Activated CD4-positive, alpha-beta T cell treated with anti-CD3 and anti-CD28 coated beads for 36 hours (primary cell): ENCODE measurements at regions of chr16 and their contacts with region 1.

Region 1: DNA sequence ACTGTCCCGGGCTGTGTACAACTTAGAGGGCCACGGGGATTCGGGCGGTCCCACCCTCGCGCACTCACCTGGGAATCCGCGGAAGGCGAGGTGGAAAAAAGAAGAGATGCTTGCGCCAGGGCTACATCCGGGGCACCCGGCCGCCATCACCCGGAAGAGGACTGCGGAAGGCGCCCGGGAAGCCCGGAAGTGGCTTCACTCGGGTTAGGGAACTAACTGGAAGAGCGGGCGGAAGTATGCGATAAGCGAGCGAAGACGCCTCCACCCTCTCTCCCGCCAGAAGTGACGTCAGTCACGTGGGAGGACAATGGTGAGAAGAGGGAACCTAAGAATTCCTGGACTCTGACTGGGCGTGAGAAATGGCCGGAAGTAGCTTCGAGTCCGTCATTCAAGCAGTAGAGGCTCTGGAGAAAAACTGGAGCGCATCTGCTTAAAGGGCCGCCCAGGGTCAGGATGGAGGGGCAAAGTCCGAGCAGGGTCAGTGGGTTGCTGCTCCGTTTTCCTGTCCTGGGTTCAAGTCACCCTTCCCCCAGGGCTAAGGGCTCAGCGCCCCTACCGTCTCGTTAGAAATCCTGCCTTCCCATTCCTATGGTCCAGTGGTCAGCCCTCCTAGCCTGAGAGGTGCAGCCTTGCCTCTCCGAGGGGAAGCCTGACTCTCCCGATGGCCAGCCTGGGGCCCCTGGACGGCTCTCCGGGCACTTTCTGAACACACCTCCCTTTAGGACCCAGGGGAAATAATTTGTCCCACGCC is at the start of gene CD2BP2:
- DNase-seq: peak; percentile 94
- ATAC-seq: peak; percentile 88
- H3K4me3 Mint-ChIP-seq: peak within 1 kb of the TSS; percentile 90
- H3K27ac Mint-ChIP-seq: peak within 1 kb of the TSS; percentile 94
- H3K4me1 Mint-ChIP-seq: peaks cover 32% of the 10 kb centered on the region
- H3K27me3 Mint-ChIP-seq: no peaks in the 10 kb centered on the region
- total RNA-seq, gene CD2BP2: 42.3 to 51.8 TPM

Region 2: GRCh38 chr16:30335598-30336474 is 19.5 kb before region 1 on chr16:
- CTCF ChIA-PET with region 1: no interaction called
- POLR2A ChIA-PET with region 1: no interaction called
- intact Hi-C with region 1: loop called (anchors 1 to 2 kb)
- DNase-seq: peak; percentile 55
- ATAC-seq: peak; percentile 13
- H3K4me3 Mint-ChIP-seq: peak overlapping the region; percentile 87
- H3K27ac Mint-ChIP-seq: peak overlapping the region; percentile 73
- H3K4me1 Mint-ChIP-seq: peaks cover 22% of the 10 kb centered on the region
- H3K27me3 Mint-ChIP-seq: no peaks in the 10 kb centered on the region

Region 3: DNA sequence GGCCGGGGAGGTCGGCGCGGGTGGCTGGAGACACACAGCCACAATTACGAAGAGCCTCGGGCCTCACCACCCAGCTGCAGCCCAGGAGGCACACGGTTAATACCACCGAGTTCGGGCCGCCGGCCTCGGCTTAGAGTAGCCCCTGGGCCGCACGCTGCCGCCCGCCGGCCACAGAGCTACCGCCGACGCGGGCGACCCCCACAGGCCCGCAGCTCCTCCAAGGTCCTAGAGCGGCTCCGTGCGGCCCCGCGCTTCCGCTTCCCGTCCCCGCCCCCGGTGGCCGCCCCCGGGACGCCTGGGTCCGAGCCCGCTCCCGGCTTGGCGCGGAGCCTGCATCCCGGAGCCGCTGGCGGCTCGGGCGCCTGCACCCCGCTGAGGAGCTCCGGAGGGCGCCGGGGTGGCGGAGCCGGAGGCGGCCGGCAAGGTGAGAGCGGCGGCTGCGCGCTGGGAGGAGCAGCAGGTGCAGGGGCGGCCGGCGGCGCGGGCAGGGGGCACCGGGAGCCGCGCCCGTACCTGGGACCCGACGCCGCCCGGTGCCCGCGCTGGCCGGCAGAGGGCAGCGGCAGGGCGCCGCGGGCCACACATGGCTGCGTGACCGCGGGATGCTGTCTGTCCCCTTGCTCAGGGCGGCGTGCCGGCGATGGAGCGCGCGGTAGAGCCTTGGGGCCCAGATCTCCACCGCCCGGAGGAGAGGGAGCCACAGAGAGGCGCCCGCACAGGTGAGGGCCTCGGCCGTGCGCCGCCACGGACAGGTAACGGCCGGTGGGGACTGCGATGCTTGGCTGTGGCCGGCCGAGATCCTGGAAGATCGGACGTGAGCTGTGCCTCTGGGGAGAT is 40.1 kb after region 1 on chr16 and contains the start of gene ZNF48:
- CTCF ChIA-PET with region 1: interaction called, 4 read pairs
- POLR2A ChIA-PET with region 1: no interaction called
- intact Hi-C with region 1: loop called in 1 of 2 experiments (anchors 1 kb)
- DNase-seq: peak; percentile 67
- ATAC-seq: peak; percentile 61
- H3K4me3 Mint-ChIP-seq: peak within 1 kb of the TSS; percentile 81
- H3K27ac Mint-ChIP-seq: peak within 1 kb of the TSS; percentile 48
- H3K4me1 Mint-ChIP-seq: peaks cover 28% of the 10 kb centered on the region
- H3K27me3 Mint-ChIP-seq: no peaks in the 10 kb centered on the region
- total RNA-seq, gene ZNF48: 10.6 to 11.0 TPM